Tibial artery (tissue), 4 donors: ENCODE measurements at regions of chr9 and their contacts with region 1.

Region 1: GRCh38 chr9:32378993-32379729 is 5.3 kb upstream of the ACO1 start:
- DNase-seq: no peak
- H3K4me3 ChIP-seq: no peak overlapping the region
- H3K27ac ChIP-seq: no peak overlapping the region
- H3K4me1 ChIP-seq: peaks cover 0 to 8% (median 4%) of the 10 kb centered on the region in 4 donors
- H3K27me3 ChIP-seq: peaks cover 0 to 5% of the 10 kb centered on the region in 2 donors
- CTCF ChIP-seq: peak; percentile 65 to 83

Region 2: GRCh38 chr9:32579706-32580331 is 200.7 kb after region 1 on chr9:
- intact Hi-C with region 1: loop called (anchors 5 kb)
- DNase-seq: peak; percentile 67 to 70
- H3K4me3 ChIP-seq: peak overlapping the region in 1 of 2 donors; percentile 19
- H3K27ac ChIP-seq: no peak overlapping the region
- H3K4me1 ChIP-seq: peaks cover 0 to 6% (median 1%) of the 10 kb centered on the region in 4 donors
- H3K27me3 ChIP-seq: no peaks in the 10 kb centered on the region
- CTCF ChIP-seq: peak; percentile 81 to 85

Region 3: GRCh38 chr9:32968101-32969011 is 589.2 kb after region 1 on chr9:
- intact Hi-C with region 1: loop called (anchors 10 kb)
- DNase-seq: peak in 1 of 2 donors; percentile 52
- H3K4me3 ChIP-seq: no peak overlapping the region
- H3K27ac ChIP-seq: no peak overlapping the region
- H3K4me1 ChIP-seq: no peaks in the 10 kb centered on the region
- H3K27me3 ChIP-seq: no peaks in the 10 kb centered on the region
- CTCF ChIP-seq: peak; percentile 65 to 81

Region 4: DNA sequence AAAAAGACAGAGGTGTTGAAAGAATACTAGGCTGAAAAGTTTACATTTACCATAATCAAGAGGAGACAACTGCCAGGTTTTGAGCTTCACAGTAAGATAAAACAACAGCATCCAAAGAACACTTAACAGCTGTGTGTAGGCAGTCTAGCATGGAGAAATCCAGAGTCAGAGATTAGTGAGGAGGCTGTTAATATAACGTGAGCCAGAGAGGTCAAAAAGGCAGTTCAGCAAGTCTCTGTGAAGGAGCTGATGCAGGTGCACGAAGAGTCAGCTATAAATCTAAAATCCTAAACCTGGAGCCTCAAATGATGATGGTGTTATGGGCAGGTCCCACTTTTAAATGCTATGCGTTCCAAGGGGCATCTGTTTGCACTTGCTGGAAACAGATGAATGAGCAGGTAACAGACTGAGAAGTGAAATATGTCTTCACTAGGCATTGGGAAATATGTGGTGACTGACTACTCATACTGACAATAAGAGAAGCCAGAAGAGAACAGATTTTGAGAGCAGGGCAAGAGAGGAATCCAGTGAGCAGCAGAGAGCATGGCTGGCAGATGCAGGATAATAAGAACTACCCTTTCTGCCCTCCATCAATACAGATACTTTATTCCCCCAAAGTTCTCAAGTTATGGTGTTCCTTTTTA is 613.6 kb after region 1 on chr9:
- intact Hi-C with region 1: loop called (anchors 10 kb)
- DNase-seq: no peak
- H3K4me3 ChIP-seq: no peak overlapping the region
- H3K27ac ChIP-seq: no peak overlapping the region
- H3K4me1 ChIP-seq: no peaks in the 10 kb centered on the region
- H3K27me3 ChIP-seq: no peaks in the 10 kb centered on the region
- CTCF ChIP-seq: no peak